Activated CD4-positive, alpha-beta memory T cell treated with anti-CD3 and anti-CD28 coated beads for 36 hours (primary cell): ENCODE measurements at regions of chr2 and their contacts with region 1.

Region 1: DNA sequence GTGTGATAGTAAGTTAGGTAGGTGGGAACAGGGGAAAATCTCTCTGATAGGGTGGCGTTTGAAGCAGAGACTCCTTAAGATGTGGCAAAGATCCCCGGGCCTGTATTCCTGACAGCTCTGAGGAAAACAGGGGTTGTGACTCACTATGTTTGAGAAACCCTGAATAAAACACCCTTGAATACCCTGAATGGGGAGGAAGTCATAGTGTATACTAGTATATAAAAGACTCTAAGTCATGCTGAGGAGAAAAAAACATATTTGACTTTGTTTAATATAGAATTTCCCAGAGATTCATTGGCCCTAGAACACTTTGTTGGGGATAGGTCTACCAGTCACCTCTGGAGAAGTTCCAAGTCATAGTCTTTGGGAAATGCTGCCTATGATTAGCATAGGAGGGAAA is 590.9 kb downstream of the IRS1 start:
- DNase-seq: no peak
- H3K4me3 Mint-ChIP-seq: no peak overlapping the region
- H3K27ac Mint-ChIP-seq: no peak overlapping the region
- H3K4me1 Mint-ChIP-seq: no peaks in the 10 kb centered on the region
- H3K27me3 Mint-ChIP-seq: peaks cover 4% of the 10 kb centered on the region

Region 2: DNA sequence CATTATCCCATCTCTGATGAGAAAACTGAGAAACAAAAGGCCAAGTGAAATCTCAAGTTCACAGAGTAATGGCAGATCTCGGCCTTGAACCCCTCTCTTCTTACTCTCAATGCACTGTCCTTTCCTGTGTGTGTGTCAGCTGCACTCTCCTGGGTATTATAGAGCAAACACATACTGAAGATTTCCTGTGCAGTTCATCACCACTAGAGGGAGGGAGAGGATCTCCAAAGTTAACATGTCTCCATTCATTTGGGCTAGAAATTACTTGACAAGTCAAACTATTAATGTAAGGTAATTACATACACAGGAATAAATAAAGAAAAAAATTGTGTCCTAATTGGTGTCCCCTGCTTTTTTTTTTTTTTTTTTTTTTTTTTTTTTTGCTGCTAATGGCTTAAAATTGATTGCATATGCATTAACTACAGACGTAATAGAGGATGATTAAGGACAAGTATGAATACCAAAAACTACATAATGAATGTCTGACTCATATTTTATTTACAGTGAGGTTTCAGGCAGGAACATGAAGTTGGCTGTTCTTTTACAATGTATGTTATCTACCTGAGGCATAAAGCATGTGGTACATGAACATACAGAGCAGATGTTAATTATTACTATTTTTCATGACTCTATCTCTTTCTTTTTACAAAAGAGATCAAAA is 540.0 kb before region 1 on chr2:
- CTCF ChIA-PET with region 1: no interaction called
- POLR2A ChIA-PET with region 1: no interaction called
- intact Hi-C with region 1: loop called (anchors 5 kb)
- DNase-seq: no peak
- H3K4me3 Mint-ChIP-seq: no peak overlapping the region
- H3K27ac Mint-ChIP-seq: no peak overlapping the region
- H3K4me1 Mint-ChIP-seq: no peaks in the 10 kb centered on the region
- H3K27me3 Mint-ChIP-seq: peaks cover 2% of the 10 kb centered on the region

Region 3: GRCh38 chr2:226159754-226160479 is 48.8 kb before region 1 on chr2:
- CTCF ChIA-PET with region 1: no interaction called
- POLR2A ChIA-PET with region 1: no interaction called
- intact Hi-C with region 1: no loop called
- DNase-seq: no peak
- H3K4me3 Mint-ChIP-seq: no peak overlapping the region
- H3K27ac Mint-ChIP-seq: no peak overlapping the region
- H3K4me1 Mint-ChIP-seq: no peaks in the 10 kb centered on the region
- H3K27me3 Mint-ChIP-seq: peaks cover 3% of the 10 kb centered on the region